Activated CD4-positive, alpha-beta T cell treated with anti-CD3 and anti-CD28 coated beads for 36 hours (primary cell): ENCODE measurements at regions of chr3 and their contacts with region 1.

Region 1: DNA sequence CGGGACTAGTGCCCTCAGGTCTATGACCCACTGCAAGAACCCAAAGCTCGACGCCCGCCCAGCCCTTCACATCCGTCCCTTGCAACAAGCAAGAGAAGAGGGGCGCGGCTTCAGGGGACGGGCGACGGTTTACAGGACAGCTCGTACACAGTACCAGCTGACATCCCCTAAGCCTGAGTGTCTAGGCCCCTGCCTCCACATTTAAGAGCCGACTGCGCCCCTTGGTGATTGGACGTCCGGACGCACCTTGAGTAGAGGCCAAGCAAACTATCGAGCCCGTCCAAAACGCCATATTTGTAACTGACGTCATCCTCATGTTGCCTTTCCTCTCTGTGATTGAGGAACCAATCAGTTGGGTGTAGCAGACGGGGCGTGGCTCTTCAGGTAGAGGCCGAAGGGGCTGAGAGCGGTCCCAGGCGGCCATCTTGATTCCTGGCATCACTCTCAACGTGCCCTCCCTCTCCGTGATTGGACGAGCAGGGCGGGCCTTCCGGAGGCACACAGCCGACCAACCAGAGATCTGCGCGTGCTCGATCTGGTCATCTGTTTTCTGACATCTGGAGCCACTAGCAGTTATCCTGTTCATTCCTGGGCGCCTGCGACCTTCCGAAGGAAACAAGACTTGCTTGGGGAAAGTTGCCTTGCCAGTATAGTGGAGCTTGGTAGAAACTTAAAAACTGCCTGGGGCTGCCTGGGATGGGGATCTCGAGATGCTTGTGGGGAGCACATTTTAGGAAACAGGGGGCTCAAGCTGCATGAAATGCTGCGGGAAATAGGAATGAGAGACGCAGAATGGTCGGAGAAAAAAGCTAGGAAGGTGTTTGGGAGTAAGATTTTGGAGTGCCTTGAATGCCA is 4.0 kb upstream of the RPL14 start:
- DNase-seq: peak; percentile 98
- ATAC-seq: peak; percentile 94
- H3K4me3 Mint-ChIP-seq: peak overlapping the region; percentile 96
- H3K27ac Mint-ChIP-seq: peak overlapping the region; percentile 96
- H3K4me1 Mint-ChIP-seq: peaks cover 30% of the 10 kb centered on the region
- H3K27me3 Mint-ChIP-seq: no peaks in the 10 kb centered on the region

Region 2: DNA sequence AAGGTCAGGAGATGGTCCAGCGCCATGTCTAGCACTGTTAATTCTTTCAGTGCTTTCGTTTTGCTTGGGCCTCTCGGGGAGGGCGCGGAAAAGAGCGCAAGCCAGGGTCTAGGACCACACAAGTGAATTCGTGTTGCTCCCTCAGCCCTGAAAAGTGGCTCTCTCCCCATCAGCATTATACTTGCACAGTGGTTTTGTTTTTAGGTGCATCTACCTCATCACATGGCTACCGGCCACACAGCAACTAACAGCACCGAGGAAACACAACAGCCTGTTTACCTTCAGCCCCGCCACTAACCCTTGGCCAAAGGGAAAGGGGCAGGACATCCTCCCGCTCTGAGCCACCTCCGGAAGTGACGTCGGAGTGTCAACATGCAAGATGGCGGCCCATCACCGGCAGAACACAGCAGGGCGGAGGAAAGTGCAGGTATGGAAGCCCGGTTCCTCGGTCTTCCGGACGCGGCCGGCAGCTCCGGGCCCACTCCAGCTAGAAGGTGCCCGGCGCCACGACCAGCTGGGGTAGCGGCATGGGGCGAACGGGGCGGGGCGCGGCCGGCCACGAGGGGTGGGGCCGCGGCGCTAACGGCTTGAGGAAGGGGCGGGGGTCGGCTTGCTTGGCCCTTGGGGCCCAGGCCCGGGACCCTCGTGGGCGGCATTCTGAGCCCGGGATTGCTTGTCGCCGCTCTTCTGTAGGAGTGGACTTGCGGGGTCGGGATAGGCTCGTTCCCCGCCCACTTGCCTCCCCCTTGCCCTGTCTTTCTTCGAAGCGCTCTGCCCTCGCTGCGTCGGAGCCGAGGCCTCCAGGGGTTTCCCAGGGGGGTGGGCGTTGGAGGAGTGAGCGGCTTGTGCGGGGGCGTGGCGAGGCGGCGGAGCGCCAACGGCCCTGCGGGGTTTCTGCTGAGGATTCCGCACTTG is 1401.2 kb before region 1 on chr3 and contains the starts of genes SCN11A and WDR48:
- CTCF ChIA-PET with region 1: no interaction called
- POLR2A ChIA-PET with region 1: no interaction called
- intact Hi-C with region 1: loop called in 1 of 2 experiments (anchors 5 kb)
- DNase-seq: peak; percentile 96
- ATAC-seq: peak; percentile 97
- H3K4me3 Mint-ChIP-seq: peak within 1 kb of the TSS; percentile 87
- H3K27ac Mint-ChIP-seq: peak within 1 kb of the TSS; percentile 97
- H3K4me1 Mint-ChIP-seq: peaks cover 45% of the 10 kb centered on the region
- H3K27me3 Mint-ChIP-seq: no peaks in the 10 kb centered on the region
- total RNA-seq, gene SCN11A: 0.07 to 0.09 TPM
- total RNA-seq, gene WDR48: 33.3 to 36.5 TPM

Region 3: DNA sequence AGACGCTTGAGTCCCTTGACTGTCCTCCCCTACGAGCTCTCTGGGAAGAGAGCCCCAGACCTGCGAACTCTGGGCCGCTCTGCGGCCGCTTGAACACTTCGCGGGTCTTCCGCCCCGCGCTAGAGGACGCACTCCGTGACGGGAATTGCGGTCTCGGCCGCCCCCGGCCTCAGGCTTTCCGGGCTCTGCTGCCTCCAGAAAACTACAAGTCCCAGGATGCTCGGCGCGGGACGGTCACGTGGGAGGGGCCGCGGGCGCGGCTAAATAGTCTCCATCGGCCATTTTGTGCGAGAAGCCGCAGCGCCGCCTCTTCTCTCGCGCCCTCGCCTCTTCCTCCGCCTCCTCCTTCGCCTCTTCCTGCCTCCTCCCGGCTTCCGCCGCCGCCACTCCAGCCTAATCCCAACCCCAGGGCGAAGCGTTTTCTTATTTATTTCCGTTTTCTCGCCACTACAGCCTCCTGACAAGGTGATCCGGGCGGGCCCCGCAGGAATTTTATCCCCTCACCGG is 143.6 kb before region 1 on chr3 and contains the start of gene EIF1B:
- CTCF ChIA-PET with region 1: no interaction called
- POLR2A ChIA-PET with region 1: interaction called, 5 read pairs
- intact Hi-C with region 1: loop called (anchors 1 kb)
- DNase-seq: peak; percentile 99
- ATAC-seq: peak; percentile 92
- H3K4me3 Mint-ChIP-seq: peak within 1 kb of the TSS; percentile 100
- H3K27ac Mint-ChIP-seq: peak within 1 kb of the TSS; percentile 99
- H3K4me1 Mint-ChIP-seq: peaks cover 25% of the 10 kb centered on the region
- H3K27me3 Mint-ChIP-seq: no peaks in the 10 kb centered on the region
- total RNA-seq, gene EIF1B: 35.1 to 39.2 TPM

Region 4: DNA sequence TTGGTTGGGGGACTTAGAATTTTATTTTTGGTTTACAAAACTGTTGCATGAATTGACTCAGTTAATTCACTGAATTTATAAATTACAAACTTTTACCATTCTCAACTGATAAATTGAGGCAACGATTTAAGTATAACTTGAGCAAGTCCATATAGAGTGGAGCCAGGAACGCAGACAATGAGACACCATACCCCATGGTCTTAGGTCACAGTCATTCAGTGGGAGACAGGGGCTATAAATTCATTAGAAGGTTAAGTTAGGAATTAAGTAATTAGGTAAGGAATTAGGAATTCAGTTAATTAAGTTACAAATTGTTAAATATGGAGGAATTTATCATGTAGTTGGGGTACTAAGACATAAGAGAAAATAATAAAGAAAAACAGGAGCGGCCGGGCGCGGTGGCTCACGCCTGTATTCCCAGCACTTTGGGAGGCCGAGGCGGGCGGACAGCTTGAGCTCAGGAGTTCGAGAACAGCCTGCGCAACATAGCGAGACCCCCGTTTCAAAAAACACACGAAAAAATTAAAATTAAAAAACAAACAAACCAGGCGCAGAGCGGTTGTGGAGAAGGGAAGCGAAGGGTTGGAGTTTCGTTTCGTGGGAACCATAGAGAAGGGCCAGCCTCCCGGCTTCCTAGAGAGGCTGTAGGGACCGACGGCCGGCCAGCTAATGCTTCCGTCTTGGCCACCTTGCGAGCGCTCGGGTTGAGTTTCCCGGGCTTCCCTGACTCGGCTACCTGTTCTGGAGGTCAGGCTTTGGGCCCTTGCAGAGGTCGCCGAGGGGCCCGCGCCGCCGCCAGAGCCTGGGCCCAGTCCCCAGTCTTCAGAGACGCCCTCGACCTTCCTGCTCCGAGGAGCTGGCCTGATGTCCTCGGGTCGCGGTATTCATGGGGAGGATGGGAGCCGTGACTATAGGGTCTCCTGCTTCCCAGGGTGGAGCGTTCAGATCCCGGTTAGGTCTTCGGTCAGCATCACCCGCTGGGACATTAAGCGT is 23.7 kb after region 1 on chr3 and contains the start of gene ZNF619:
- CTCF ChIA-PET with region 1: interaction called, 4 read pairs
- POLR2A ChIA-PET with region 1: interaction called, 4 read pairs
- intact Hi-C with region 1: loop called in 1 of 2 experiments (anchors 1 kb)
- DNase-seq: peak; percentile 64
- ATAC-seq: peak; percentile 79
- H3K4me3 Mint-ChIP-seq: peak within 1 kb of the TSS; percentile 80
- H3K27ac Mint-ChIP-seq: peak within 1 kb of the TSS; percentile 83
- H3K4me1 Mint-ChIP-seq: peaks cover 15% of the 10 kb centered on the region
- H3K27me3 Mint-ChIP-seq: no peaks in the 10 kb centered on the region
- total RNA-seq, gene ZNF619: 5.6 to 7.0 TPM

Region 5: GRCh38 chr3:40566694-40567093 is 113.6 kb after region 1 on chr3:
- CTCF ChIA-PET with region 1: no interaction called
- POLR2A ChIA-PET with region 1: no interaction called
- intact Hi-C with region 1: no loop called
- DNase-seq: no peak
- ATAC-seq: no peak
- H3K4me3 Mint-ChIP-seq: no peak overlapping the region
- H3K27ac Mint-ChIP-seq: no peak overlapping the region
- H3K4me1 Mint-ChIP-seq: no peaks in the 10 kb centered on the region
- H3K27me3 Mint-ChIP-seq: peaks cover 2% of the 10 kb centered on the region

Region 6: GRCh38 chr3:41198950-41199865 is 746.1 kb after region 1 on chr3 and contains the start of gene CTNNB1:
- CTCF ChIA-PET with region 1: no interaction called
- POLR2A ChIA-PET with region 1: no interaction called
- intact Hi-C with region 1: loop called (anchors 1 to 10 kb)
- DNase-seq: peak; percentile 94
- ATAC-seq: peak; percentile 86
- H3K4me3 Mint-ChIP-seq: peak within 1 kb of the TSS; percentile 91
- H3K27ac Mint-ChIP-seq: peak within 1 kb of the TSS; percentile 88
- H3K4me1 Mint-ChIP-seq: peaks cover 36% of the 10 kb centered on the region
- H3K27me3 Mint-ChIP-seq: peaks cover 8% of the 10 kb centered on the region
- total RNA-seq, gene CTNNB1: 114 to 158 TPM

Region 7: DNA sequence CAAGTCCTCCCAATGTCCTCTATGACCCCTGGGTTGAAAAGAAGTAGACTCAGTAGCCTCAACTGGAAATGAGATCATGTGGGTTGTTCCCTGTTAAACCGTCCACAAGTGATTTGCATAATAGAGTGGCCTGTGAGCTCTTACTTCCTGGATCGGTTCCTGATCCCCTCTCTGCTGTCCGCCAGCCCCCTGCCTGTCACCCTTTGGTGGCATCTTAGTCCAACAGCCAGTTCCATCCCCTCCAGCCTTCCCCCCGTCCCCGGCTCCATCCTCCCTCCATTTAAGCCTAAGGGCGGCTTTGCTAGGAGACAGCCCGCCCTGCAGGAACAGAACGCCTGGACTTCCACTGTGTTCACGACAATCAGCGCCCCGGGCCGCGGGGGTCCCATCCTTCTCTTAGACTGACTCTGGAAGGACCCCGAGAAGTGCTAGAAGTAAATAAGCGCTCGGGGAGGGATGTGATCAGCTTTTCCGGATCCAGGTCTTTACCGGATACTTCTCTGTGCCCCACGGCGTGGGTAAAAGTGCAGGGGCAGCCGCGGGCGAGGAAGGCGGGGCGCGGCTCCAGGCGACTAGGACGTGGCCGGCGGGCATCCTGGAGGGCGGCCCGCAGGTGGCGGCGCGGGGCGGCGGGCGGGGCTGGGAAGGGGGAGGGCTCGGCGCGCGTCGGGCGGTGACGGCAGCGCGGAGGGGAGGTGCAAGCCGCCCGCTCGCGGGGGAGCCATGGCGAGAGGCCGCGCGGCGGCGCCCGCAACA is 1560.0 kb after region 1 on chr3:
- CTCF ChIA-PET with region 1: no interaction called
- POLR2A ChIA-PET with region 1: no interaction called
- intact Hi-C with region 1: loop called in 1 of 2 experiments (anchors 2 kb)
- DNase-seq: peak; percentile 88
- ATAC-seq: peak; percentile 75
- H3K4me3 Mint-ChIP-seq: peak overlapping the region; percentile 90
- H3K27ac Mint-ChIP-seq: peak overlapping the region; percentile 92
- H3K4me1 Mint-ChIP-seq: peaks cover 46% of the 10 kb centered on the region
- H3K27me3 Mint-ChIP-seq: no peaks in the 10 kb centered on the region